GM13976 (cell line): ENCODE measurements at regions of chr2 and their contacts with region 1.

Region 1: GRCh38 chr2:222903234-222904220 is 42.7 kb downstream of the ACSL3 start:
- DNase-seq: peak; percentile 68
- CTCF ChIP-seq: peak; percentile 53

Region 2: GRCh38 chr2:222690564-222691200 is 212.8 kb before region 1 on chr2:
- in situ Hi-C with region 1: loop called (anchors 10 kb)
- DNase-seq: peak; percentile 85
- CTCF ChIP-seq: peak; percentile 96